ENCODE measurements at regions of chr1 and their contacts with region 1.

Region 1: DNA sequence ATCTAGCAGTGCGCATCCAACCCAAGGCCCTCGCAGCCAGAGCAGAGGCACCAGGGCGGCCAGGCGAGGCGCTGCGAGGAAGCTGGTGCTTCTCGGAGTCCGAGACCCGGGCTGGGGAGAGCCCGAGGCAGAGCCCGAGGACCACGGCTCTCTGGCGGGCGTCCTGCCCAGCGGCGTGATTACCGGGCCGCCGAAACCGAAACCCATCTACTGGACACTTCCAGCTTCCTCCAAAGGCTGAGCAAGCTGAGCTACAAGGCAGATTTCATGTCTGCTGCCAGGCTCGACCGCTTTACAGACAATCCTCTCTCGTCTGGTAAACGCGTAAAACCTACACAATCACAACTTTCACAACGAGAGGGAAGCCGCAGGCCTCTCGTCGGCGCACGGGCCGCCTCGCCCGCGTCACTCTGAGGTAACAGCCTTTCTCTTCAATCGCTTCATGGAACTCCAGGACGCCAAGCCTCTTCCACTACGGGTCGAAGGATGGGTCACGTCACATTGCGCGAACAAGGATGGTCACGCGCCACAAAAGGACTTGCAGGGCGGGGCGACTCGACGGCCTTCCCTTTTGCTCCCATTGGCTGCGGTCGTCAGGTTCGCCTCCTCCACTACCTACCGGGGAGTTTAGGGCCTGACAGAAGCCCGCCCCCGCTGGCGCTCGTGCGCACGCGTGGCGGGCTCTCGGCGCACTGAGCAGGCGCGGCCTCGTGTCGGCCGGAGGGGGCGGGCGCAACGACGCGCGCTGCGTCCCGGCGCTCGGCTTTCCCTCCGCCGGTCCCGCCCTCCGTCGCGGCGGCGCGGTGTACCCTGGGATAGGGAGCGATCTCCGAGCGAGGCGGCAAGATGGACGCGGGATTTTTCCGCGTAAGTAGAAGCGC is at the start of gene SRRM1:
- DNase-seq: peak; percentile 100
- ATAC-seq: peak; percentile 90
- H3K4me3 ChIP-seq: peak within 1 kb of the TSS; percentile 81 to 99 (median 97)
- H3K4me3 Mint-ChIP-seq: peak within 1 kb of the TSS; percentile 96
- H3K27ac ChIP-seq: peak within 1 kb of the TSS; percentile 98 to 99
- H3K27ac Mint-ChIP-seq: peak within 1 kb of the TSS; percentile 99
- H3K4me1 ChIP-seq: peaks cover 17 to 25% of the 10 kb centered on the region in 2 donors
- H3K4me1 Mint-ChIP-seq: peaks cover 36% of the 10 kb centered on the region
- H3K27me3 ChIP-seq: no peaks in the 10 kb centered on the region
- H3K27me3 Mint-ChIP-seq: no peaks in the 10 kb centered on the region
- CTCF ChIP-seq: no peak
- total RNA-seq, gene SRRM1: 226 and 238 TPM in 2 replicates

Region 2: GRCh38 chr1:24186993-24187805 is 455.5 kb before region 1 on chr1 and contains the start of gene IFNLR1:
- CTCF ChIA-PET with region 1: interaction called, 3 read pairs
- POLR2A ChIA-PET with region 1: interaction called, 9 read pairs
- intact Hi-C with region 1: loop called (anchors 1 kb)
- DNase-seq: peak; percentile 87
- ATAC-seq: peak; percentile 57
- H3K4me3 ChIP-seq: peak within 1 kb of the TSS; percentile 65 to 85 (median 77)
- H3K4me3 Mint-ChIP-seq: peak within 1 kb of the TSS; percentile 95
- H3K27ac ChIP-seq: peak within 1 kb of the TSS; percentile 82
- H3K27ac Mint-ChIP-seq: peak within 1 kb of the TSS; percentile 93
- H3K4me1 ChIP-seq: peaks cover 69 to 78% of the 10 kb centered on the region in 2 donors
- H3K4me1 Mint-ChIP-seq: peaks cover 83% of the 10 kb centered on the region
- H3K27me3 ChIP-seq: no peaks in the 10 kb centered on the region
- H3K27me3 Mint-ChIP-seq: no peaks in the 10 kb centered on the region
- CTCF ChIP-seq: no peak
- total RNA-seq, gene IFNLR1: 38.0 and 39.7 TPM in 2 replicates

Region 3: DNA sequence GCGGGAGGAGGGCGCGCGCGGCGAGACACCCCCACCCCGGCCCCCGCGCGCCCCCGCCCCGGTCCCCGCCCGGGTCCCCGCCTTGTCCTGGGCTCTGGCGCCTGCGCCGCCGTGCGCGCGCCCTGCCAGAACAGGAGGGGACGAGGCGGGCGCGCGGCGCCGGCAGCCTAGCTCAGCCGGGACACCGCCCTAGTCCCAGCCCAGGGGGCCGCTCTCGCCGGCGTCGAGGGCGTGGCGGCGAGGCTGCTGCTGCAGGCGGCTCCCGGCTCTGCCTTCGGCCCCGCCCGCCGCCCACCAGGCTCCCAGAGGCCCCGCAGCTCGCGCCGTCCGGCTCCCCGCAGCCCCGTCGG is 140.0 kb before region 1 on chr1 and contains the start of gene RCAN3:
- CTCF ChIA-PET with region 1: no interaction called
- POLR2A ChIA-PET with region 1: interaction called, 3 read pairs
- intact Hi-C with region 1: loop called (anchors 2 kb)
- DNase-seq: peak; percentile 93
- ATAC-seq: peak; percentile 86
- H3K4me3 ChIP-seq: peak within 1 kb of the TSS; percentile 66 to 92 (median 83)
- H3K4me3 Mint-ChIP-seq: peak within 1 kb of the TSS; percentile 97
- H3K27ac ChIP-seq: peak within 1 kb of the TSS; percentile 93 to 94
- H3K27ac Mint-ChIP-seq: peak within 1 kb of the TSS; percentile 96
- H3K4me1 ChIP-seq: peaks cover 43 to 46% of the 10 kb centered on the region in 2 donors
- H3K4me1 Mint-ChIP-seq: peaks cover 55% of the 10 kb centered on the region
- H3K27me3 ChIP-seq: no peaks in the 10 kb centered on the region
- H3K27me3 Mint-ChIP-seq: no peaks in the 10 kb centered on the region
- CTCF ChIP-seq: no peak
- total RNA-seq, gene RCAN3: 35.1 and 37.3 TPM in 2 replicates

Region 4: DNA sequence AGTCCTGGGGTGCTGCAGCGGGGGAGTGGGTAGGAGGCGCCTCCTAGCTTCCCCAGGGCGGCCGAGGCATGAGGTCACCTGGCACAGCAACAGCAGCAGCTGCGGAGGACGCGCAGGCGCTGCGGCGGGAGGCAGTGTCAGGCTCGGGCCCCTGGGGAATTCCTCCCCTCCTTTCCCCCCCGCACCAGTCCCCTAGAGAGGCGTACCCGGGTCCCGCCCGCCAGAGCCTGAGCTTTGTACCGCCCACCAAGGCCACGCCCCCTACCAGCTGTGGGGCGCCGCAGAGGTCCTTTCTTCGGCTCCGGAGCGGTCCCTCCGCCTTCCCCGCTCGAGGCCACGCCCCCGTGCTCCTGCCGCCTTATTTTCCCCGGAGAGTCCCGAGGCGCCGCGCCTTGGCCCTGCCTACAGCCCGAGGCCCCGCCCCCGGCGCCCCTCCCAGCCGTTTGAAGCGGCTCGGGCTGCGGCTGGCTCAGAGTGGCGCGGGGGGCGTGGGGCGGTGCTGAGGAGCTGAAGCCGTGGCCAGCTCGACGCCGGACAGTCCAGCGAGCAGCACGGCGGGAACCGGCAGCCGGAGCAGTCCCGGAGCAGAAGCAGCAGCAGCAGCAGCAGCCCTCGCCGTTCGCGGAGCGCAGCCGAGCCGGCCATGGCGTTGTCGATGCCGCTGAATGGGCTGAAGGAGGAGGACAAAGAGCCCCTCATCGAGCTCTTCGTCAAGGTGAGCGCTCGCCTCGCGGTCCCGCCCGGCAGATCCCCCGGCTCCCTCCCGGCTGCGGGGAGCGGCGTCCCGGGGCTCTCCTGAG is 102.4 kb after region 1 on chr1 and contains the start of gene CLIC4:
- CTCF ChIA-PET with region 1: interaction called, 4 read pairs
- POLR2A ChIA-PET with region 1: interaction called, 6 read pairs
- intact Hi-C with region 1: loop called (anchors 1 kb)
- DNase-seq: peak; percentile 100
- ATAC-seq: peak; percentile 78
- H3K4me3 ChIP-seq: peak within 1 kb of the TSS; percentile 79 to 99 (median 91)
- H3K4me3 Mint-ChIP-seq: peak within 1 kb of the TSS; percentile 94
- H3K27ac ChIP-seq: peak within 1 kb of the TSS; percentile 72 to 88
- H3K27ac Mint-ChIP-seq: peak within 1 kb of the TSS; percentile 99
- H3K4me1 ChIP-seq: peaks cover 63 to 82% of the 10 kb centered on the region in 2 donors
- H3K4me1 Mint-ChIP-seq: peaks cover 67% of the 10 kb centered on the region
- H3K27me3 ChIP-seq: no peaks in the 10 kb centered on the region
- H3K27me3 Mint-ChIP-seq: no peaks in the 10 kb centered on the region
- CTCF ChIP-seq: no peak
- total RNA-seq, gene CLIC4: 123 and 127 TPM in 2 replicates

Region 5: DNA sequence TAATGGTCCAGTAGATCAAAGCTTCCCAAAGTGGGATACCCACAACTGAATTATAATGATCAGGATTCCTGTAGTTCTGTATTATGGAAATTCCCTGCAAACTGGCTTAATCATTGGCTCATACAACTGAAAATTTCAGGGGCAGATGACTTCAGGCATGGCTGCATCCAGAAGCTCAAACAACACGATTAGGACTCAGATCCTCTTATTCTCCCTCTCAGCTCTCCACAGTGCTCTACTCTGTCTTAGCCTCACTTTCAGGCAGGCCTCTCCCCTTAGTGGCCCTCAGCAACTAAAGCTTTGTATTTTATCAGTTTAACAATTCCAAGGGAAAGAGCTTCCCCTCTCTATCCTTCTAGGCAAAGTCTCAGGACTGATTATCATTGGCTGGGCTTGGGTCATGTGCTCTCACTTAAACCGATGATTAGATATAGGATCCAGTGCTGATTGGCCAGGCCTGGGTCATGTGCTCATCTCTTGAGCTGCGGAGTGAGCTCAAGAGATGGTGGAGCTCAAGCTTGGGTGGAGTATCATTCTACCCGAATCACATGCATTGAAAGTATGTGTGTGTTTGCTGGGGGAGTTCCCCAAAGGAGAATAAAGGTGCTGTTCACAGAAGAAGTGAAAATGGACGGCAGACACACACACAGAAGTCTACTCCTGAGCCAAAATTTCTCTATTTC is 345.3 kb after region 1 on chr1:
- CTCF ChIA-PET with region 1: no interaction called
- POLR2A ChIA-PET with region 1: no interaction called
- intact Hi-C with region 1: no loop called
- DNase-seq: peak; percentile 76
- ATAC-seq: peak; percentile 88
- H3K4me3 ChIP-seq: no peak overlapping the region
- H3K4me3 Mint-ChIP-seq: peak overlapping the region; percentile 53
- H3K27ac ChIP-seq: peak overlapping the region; percentile 12 to 27
- H3K27ac Mint-ChIP-seq: peak overlapping the region; percentile 80
- H3K4me1 ChIP-seq: peaks cover 16 to 22% of the 10 kb centered on the region in 2 donors
- H3K4me1 Mint-ChIP-seq: peaks cover 33% of the 10 kb centered on the region
- H3K27me3 ChIP-seq: peaks cover 0 to 3% (median 0%) of the 10 kb centered on the region in 4 experiments
- H3K27me3 Mint-ChIP-seq: no peaks in the 10 kb centered on the region
- CTCF ChIP-seq: no peak

Region 6: DNA sequence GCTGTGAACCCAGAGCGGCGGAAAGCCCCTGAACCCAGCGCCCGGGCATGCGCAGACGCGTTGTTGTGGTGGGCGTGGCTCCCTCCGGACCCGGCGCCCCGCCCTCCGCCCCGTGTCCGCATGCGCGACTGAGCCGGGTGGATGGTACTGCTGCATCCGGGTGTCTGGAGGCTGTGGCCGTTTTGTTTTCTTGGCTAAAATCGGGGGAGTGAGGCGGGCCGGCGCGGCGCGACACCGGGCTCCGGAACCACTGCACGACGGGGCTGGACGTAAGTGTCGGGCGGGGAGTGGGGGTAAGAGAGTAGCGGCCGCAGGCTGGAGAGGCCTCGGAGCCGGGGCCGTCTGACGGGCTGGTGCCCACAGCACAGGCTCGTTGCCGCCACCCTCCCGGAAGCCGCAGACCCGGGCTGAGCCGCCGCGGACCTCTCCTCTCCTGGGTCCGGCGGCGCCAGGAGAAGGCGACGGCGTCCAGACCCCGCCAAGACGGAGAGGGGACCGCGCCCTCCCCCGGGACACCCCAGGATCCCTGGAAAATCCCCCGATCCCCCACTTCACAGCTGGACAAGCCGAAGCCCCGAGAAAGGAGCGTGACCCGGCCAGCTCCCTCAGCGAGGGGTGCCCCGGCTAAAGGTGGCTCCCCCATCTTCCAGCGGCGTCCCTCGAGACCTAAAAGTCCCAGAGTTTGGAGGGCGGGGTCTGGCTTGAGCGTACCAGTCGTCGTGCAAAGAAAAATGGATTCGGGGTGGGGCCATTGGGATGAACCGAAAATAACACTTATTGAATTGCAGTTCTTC is 695.7 kb after region 1 on chr1 and contains the start of gene TMEM50A:
- CTCF ChIA-PET with region 1: no interaction called
- POLR2A ChIA-PET with region 1: no interaction called
- intact Hi-C with region 1: loop called (anchors 10 kb)
- DNase-seq: peak; percentile 95
- ATAC-seq: peak; percentile 77
- H3K4me3 ChIP-seq: peak within 1 kb of the TSS; percentile 83 to 89 (median 84)
- H3K4me3 Mint-ChIP-seq: peak within 1 kb of the TSS; percentile 96
- H3K27ac ChIP-seq: peak within 1 kb of the TSS; percentile 86 to 87
- H3K27ac Mint-ChIP-seq: peak within 1 kb of the TSS; percentile 98
- H3K4me1 ChIP-seq: peaks cover 14% of the 10 kb centered on the region in 2 donors
- H3K4me1 Mint-ChIP-seq: peaks cover 30% of the 10 kb centered on the region
- H3K27me3 ChIP-seq: no peaks in the 10 kb centered on the region
- H3K27me3 Mint-ChIP-seq: no peaks in the 10 kb centered on the region
- CTCF ChIP-seq: no peak
- total RNA-seq, gene TMEM50A: 59.4 and 62.6 TPM in 2 replicates

Measured in B cell (primary cell).